HEK293 (cell line): ENCODE measurements at regions of chr12 and their contacts with region 1.

Region 1: GRCh38 chr12:49515266-49515665 is 23.6 kb upstream of the KCNH3 start:
- H3K4me3 ChIP-seq: no peak overlapping the region
- H3K27ac ChIP-seq: no peak overlapping the region
- H3K4me1 ChIP-seq: peaks cover 5% of the 10 kb centered on the region
- CTCF ChIP-seq: no peak

Region 2: GRCh38 chr12:49244176-49244575 is 271.1 kb before region 1 on chr12:
- CTCF ChIA-PET with region 1: no interaction called
- POLR2A ChIA-PET with region 1: no interaction called
- H3K4me3 ChIP-seq: no peak overlapping the region
- H3K27ac ChIP-seq: no peak overlapping the region
- H3K4me1 ChIP-seq: no peaks in the 10 kb centered on the region
- CTCF ChIP-seq: no peak

Region 3: DNA sequence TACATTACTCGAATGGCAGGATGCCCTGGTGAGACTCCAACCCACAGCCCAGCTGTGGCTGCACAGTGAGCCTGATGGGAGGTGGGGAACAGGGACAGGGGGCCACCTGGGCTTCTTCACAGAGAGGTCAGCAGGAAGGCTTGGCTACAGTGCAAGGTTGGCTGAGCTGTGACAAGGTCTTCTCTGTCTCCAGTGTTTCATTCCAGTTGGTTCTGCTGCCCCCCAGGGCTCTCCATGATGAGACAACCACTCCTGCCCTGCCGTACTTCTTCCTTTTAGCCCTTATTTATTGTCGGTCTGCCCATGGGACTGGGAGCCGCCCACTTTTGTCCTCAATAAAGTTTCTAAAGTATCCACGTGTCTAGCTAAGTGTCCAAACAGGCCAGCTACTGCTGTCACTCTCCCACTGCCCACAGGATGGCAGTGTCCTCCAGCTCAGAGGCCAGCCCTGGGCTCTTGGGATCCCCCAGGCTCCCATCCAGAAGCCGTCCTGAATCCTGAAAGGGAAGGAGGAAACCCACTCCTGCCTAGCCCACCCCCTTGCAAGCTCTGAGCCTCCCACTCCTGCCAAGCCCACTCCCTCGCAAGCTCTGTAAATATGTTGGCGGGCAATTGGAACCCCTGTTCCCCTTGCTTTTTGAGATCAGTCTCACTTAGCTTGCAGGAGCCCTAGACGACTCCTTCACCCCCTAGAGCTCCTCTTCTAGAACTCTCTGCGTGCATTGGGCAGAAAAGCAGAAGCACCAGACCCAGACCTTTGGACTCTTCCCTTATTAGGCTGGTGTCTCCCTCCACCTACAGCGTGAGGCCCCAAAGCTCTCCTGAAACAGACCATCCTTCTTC is 183.7 kb before region 1 on chr12:
- CTCF ChIA-PET with region 1: interaction called, 26 read pairs
- POLR2A ChIA-PET with region 1: no interaction called
- H3K4me3 ChIP-seq: no peak overlapping the region
- H3K27ac ChIP-seq: no peak overlapping the region
- H3K4me1 ChIP-seq: peaks cover 5% of the 10 kb centered on the region; the same call in 1 of the 2 replicates
- CTCF ChIP-seq: peak; percentile 88

Region 4: GRCh38 chr12:49347384-49348237 is 167.7 kb before region 1 on chr12:
- CTCF ChIA-PET with region 1: interaction called, 35 read pairs
- POLR2A ChIA-PET with region 1: interaction called, 3 read pairs
- H3K4me3 ChIP-seq: peak overlapping the region; percentile 32
- H3K27ac ChIP-seq: peak overlapping the region; percentile 80; the same call in 1 of the 2 replicates
- H3K4me1 ChIP-seq: peaks cover 21% of the 10 kb centered on the region
- CTCF ChIP-seq: peak; percentile 97

Region 5: GRCh38 chr12:49527361-49528130 is 12.3 kb after region 1 on chr12:
- CTCF ChIA-PET with region 1: interaction called, 27 read pairs
- POLR2A ChIA-PET with region 1: no interaction called
- H3K4me3 ChIP-seq: no peak overlapping the region
- H3K27ac ChIP-seq: no peak overlapping the region
- H3K4me1 ChIP-seq: no peaks in the 10 kb centered on the region
- CTCF ChIP-seq: no peak

Region 6: DNA sequence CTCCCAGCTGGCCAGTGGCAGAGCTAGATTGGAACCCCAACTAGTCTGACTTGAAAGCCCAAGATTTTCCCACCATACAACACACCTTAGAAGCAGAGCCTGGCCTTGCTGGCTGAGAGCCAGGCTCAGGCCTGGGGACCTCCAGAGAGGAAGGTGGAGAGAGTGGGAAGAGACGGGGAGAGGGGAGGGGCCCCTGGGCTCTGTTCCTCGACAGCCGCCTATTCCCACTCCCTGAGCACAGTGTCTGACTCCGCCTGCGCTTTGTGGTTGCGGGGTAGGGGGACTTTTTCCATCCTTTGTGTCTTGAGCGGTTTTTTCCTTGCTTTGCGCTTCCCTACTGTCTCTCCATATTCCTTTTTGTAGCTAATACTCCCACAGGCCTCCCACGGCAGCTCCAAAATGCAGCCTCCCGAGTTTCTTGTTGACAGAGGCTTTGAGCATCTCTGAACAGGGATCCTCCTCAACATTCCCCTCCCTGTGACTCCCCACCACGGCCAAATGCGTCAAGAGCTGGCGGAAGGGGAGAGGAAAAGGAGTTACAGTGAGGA is 19.5 kb after region 1 on chr12:
- CTCF ChIA-PET with region 1: interaction called, 10 read pairs
- POLR2A ChIA-PET with region 1: no interaction called
- H3K4me3 ChIP-seq: no peak overlapping the region
- H3K27ac ChIP-seq: no peak overlapping the region
- H3K4me1 ChIP-seq: peaks cover 2% of the 10 kb centered on the region; the same call in 1 of the 2 replicates
- CTCF ChIP-seq: no peak

Region 7: GRCh38 chr12:49553512-49554088 is 38.3 kb after region 1 on chr12:
- CTCF ChIA-PET with region 1: interaction called, 11 read pairs
- POLR2A ChIA-PET with region 1: no interaction called
- H3K4me3 ChIP-seq: no peak overlapping the region
- H3K27ac ChIP-seq: no peak overlapping the region
- H3K4me1 ChIP-seq: no peaks in the 10 kb centered on the region
- CTCF ChIP-seq: peak; percentile 86

Region 8: GRCh38 chr12:49580572-49581535 is 65.6 kb after region 1 on chr12:
- CTCF ChIA-PET with region 1: interaction called, 54 read pairs
- POLR2A ChIA-PET with region 1: no interaction called
- H3K4me3 ChIP-seq: no peak overlapping the region
- H3K27ac ChIP-seq: no peak overlapping the region
- H3K4me1 ChIP-seq: no peaks in the 10 kb centered on the region
- CTCF ChIP-seq: peak; percentile 90